H1 (cell line): ENCODE measurements at regions of chr10 and their contacts with region 1.

Region 1: GRCh38 chr10:123132576-123133477 is 2.9 kb upstream of the HMX3 start:
- DNase-seq: peak in 1 of 2 experiments; percentile 96
- H3K4me3 ChIP-seq: peak overlapping the region; percentile 25 to 59 (median 48); a peak in 7 of 8 replicates
- H3K27ac ChIP-seq: no peak overlapping the region
- H3K4me1 ChIP-seq: peaks cover 7 to 36% (median 22%) of the 10 kb centered on the region in 4 experiments
- H3K27me3 ChIP-seq: peaks cover 51 to 75% (median 65%) of the 10 kb centered on the region in 4 experiments
- CTCF ChIP-seq: peak; percentile 84 to 93 (median 88)
- EP300 ChIP-seq: peak in 1 of 2 experiments; percentile 37; a peak in 1 of 3 replicates
- POLR2A ChIP-seq: no peak
- RAD21 ChIP-seq: peak; percentile 82 to 88

Region 2: DNA sequence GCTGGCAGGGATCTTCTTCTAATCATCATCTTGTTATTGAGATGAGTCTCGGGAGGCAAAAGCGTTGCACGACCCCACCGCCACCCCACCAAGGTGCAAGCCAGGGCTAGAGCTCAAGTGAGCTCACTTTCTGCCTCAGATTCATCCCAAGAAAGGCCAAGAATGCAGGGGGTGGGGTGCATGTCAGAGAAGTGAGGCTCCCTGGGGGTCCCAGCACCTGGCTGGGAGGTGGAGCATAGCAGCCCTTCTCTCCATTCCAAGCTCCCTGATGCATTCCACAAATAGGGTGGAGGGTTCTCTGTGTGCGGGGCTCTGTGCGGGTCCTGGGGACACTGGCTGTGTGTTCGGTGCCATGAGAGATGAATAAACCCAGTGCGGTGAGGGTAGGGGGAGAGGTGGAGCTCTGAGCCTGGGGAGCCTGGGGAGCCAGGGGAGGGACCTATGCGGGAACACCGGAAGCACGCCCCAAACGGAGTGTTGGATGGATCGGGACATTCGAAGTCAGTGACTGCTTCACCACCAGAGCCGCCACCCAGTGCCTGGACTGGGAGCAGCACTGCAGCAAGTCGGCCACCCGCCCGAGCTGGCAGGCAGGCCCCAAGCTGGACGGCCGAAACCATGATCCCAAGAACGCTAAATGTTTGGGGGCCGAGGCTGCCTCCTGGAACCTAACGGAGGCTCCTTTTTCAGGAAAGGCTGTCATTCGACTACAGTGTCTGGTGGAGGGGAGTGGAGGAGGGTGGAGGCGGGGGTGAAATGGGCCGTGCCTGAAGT is 15.0 kb before region 1 on chr10:
- CTCF ChIA-PET with region 1: interaction called, 28 read pairs
- POLR2A ChIA-PET with region 1: interaction called, 5 read pairs
- DNase-seq: peak in 1 of 2 experiments; percentile 80
- H3K4me3 ChIP-seq: peak overlapping the region in 1 of 4 experiments; percentile 43; a peak in 4 of 8 replicates
- H3K27ac ChIP-seq: no peak overlapping the region
- H3K4me1 ChIP-seq: peaks cover 7 to 13% (median 10%) of the 10 kb centered on the region in 4 experiments
- H3K27me3 ChIP-seq: peaks cover 0 to 2% (median 0%) of the 10 kb centered on the region in 4 experiments; a peak in 3 of 7 replicates
- CTCF ChIP-seq: peak; percentile 29 to 54 (median 33)
- EP300 ChIP-seq: peak in 1 of 2 experiments; percentile 58; a peak in 1 of 3 replicates
- POLR2A ChIP-seq: peak in 1 of 2 experiments; percentile 50; a peak in 1 of 3 replicates
- RAD21 ChIP-seq: peak; percentile 27 to 45; a peak in 3 of 4 replicates

Region 3: GRCh38 chr10:123147635-123148413 is 15.0 kb after region 1 on chr10 and contains the start of gene HMX2:
- CTCF ChIA-PET with region 1: interaction called, 37 read pairs
- POLR2A ChIA-PET with region 1: interaction called, 35 read pairs
- DNase-seq: peak in 1 of 2 experiments; percentile 91
- H3K4me3 ChIP-seq: peak within 1 kb of the TSS; percentile 17 to 59 (median 34)
- H3K27ac ChIP-seq: no peak within 1 kb of the TSS
- H3K4me1 ChIP-seq: peaks cover 22 to 65% (median 41%) of the 10 kb centered on the region in 4 experiments
- H3K27me3 ChIP-seq: peaks cover 74 to 97% (median 87%) of the 10 kb centered on the region in 4 experiments
- CTCF ChIP-seq: peak in 2 of 3 experiments; percentile 19 to 44; a peak in 3 of 4 replicates
- EP300 ChIP-seq: no peak
- POLR2A ChIP-seq: no peak
- RAD21 ChIP-seq: no peak; a peak in 2 of 4 replicates
- total RNA-seq, gene HMX2: 1.3 and 2.0 TPM in 2 replicates

Region 4: GRCh38 chr10:123154092-123154921 is 21.5 kb after region 1 on chr10 and contains the start of gene BUB3:
- CTCF ChIA-PET with region 1: interaction called, 37 read pairs
- POLR2A ChIA-PET with region 1: interaction called, 35 read pairs
- DNase-seq: peak; percentile 87 to 99
- H3K4me3 ChIP-seq: peak within 1 kb of the TSS; percentile 78 to 94 (median 92)
- H3K27ac ChIP-seq: peak within 1 kb of the TSS; percentile 83; the same call in 1 of the 2 replicates
- H3K4me1 ChIP-seq: peaks cover 4 to 21% (median 13%) of the 10 kb centered on the region in 4 experiments
- H3K27me3 ChIP-seq: peaks cover 13 to 38% (median 25%) of the 10 kb centered on the region in 4 experiments; a peak in 6 of 7 replicates
- CTCF ChIP-seq: no peak
- EP300 ChIP-seq: no peak
- POLR2A ChIP-seq: peak in 1 of 2 experiments; percentile 95; a peak in 2 of 3 replicates
- RAD21 ChIP-seq: no peak
- total RNA-seq, gene BUB3: 184 and 207 TPM in 2 replicates